PC-3 (cell line): ENCODE measurements at regions of chr20 and their contacts with region 1.

Region 1: DNA sequence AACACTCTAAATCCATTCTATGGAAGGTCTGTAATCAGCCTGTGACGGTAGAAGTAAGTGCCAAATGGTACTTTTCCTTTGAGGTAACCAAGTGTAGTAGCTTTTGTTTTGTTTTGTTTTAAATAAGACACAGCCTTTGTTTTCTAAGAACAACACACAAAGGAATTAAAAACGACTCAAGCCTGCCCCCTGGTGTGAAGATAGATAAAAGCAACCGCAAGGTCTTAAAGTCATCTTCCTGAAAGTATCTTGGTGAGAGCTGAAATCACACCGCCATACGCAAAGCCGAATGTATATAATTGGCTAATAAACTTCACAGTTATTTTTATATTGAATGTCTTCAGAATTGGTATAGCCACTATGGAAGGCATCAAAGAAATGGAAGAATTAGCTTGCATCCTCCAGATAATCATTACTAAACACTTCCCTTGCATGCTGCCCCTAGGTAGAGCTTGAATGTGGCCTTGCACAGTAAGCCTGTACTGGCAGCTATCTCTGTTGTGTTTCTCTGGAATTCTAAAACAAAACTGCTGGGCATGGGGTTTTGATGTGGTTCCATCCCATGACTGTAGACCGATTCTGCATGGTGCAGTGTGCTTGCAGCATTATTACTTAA is 95.6 kb downstream of the LAMP5 start:
- DNase-seq: peak; percentile 94
- ATAC-seq: peak; percentile 78
- H3K4me3 ChIP-seq: no peak overlapping the region
- H3K27ac ChIP-seq: no peak overlapping the region
- H3K4me1 ChIP-seq: peaks cover 7% of the 10 kb centered on the region
- H3K27me3 ChIP-seq: no peaks in the 10 kb centered on the region
- CTCF ChIP-seq: peak; percentile 93

Region 2: GRCh38 chr20:7897781-7898364 is 1712.1 kb before region 1 on chr20:
- CTCF ChIA-PET with region 1: no interaction called
- POLR2A ChIA-PET with region 1: interaction called, 30 read pairs
- intact Hi-C with region 1: no loop called
- DNase-seq: no peak
- ATAC-seq: no peak
- H3K4me3 ChIP-seq: no peak overlapping the region
- H3K27ac ChIP-seq: no peak overlapping the region
- H3K4me1 ChIP-seq: peaks cover 16% of the 10 kb centered on the region
- H3K27me3 ChIP-seq: no peaks in the 10 kb centered on the region
- CTCF ChIP-seq: no peak

Region 3: GRCh38 chr20:9458138-9458796 is 151.7 kb before region 1 on chr20:
- CTCF ChIA-PET with region 1: interaction called, 7 read pairs
- POLR2A ChIA-PET with region 1: no interaction called
- intact Hi-C with region 1: loop called (anchors 2 kb)
- DNase-seq: peak; percentile 61
- ATAC-seq: peak; percentile 48; the same call in 1 of the 2 replicates
- H3K4me3 ChIP-seq: no peak overlapping the region
- H3K27ac ChIP-seq: no peak overlapping the region
- H3K4me1 ChIP-seq: peaks cover 16% of the 10 kb centered on the region
- H3K27me3 ChIP-seq: no peaks in the 10 kb centered on the region
- CTCF ChIP-seq: peak; percentile 80

Region 4: GRCh38 chr20:9517297-9518162 is 92.5 kb before region 1 on chr20:
- CTCF ChIA-PET with region 1: interaction called, 14 read pairs
- POLR2A ChIA-PET with region 1: no interaction called
- intact Hi-C with region 1: no loop called
- DNase-seq: no peak
- ATAC-seq: no peak
- H3K4me3 ChIP-seq: no peak overlapping the region
- H3K27ac ChIP-seq: no peak overlapping the region
- H3K4me1 ChIP-seq: peaks cover 4% of the 10 kb centered on the region; the same call in 1 of the 2 replicates
- H3K27me3 ChIP-seq: peaks cover 19% of the 10 kb centered on the region
- CTCF ChIP-seq: no peak

Region 5: DNA sequence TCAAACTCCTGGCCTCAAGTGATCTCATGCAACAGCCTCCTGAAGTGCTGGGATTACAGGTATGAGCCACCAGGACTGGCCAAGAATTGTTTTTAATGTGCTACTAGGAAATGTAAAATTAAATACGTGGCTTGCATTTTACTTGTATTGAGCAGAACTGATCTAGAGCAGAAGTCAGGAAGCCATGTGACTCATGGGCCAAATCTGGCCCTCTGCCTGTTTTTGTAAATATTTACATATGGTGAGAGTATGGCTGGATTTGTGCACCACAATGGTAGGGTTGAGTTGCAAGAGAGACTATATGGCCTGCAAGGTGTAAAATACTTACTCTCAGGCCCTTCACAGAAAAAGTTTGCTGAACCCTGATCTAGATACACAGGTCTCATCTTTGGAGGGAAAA is 19.8 kb before region 1 on chr20:
- CTCF ChIA-PET with region 1: interaction called, 10 read pairs
- POLR2A ChIA-PET with region 1: no interaction called
- intact Hi-C with region 1: no loop called
- DNase-seq: peak; percentile 99
- ATAC-seq: peak; percentile 82
- H3K4me3 ChIP-seq: no peak overlapping the region
- H3K27ac ChIP-seq: peak overlapping the region; percentile 62
- H3K4me1 ChIP-seq: peaks cover 53% of the 10 kb centered on the region
- H3K27me3 ChIP-seq: no peaks in the 10 kb centered on the region
- CTCF ChIP-seq: no peak

Region 6: GRCh38 chr20:9626357-9626756 is 16.4 kb after region 1 on chr20:
- CTCF ChIA-PET with region 1: no interaction called
- POLR2A ChIA-PET with region 1: no interaction called
- intact Hi-C with region 1: no loop called
- DNase-seq: peak; percentile 70
- ATAC-seq: peak; percentile 65
- H3K4me3 ChIP-seq: no peak overlapping the region
- H3K27ac ChIP-seq: no peak overlapping the region
- H3K4me1 ChIP-seq: 0 out of 2 replicates have a peak, but pooled peaks cover 4% of the 10 kb centered on the region
- H3K27me3 ChIP-seq: peaks cover 42% of the 10 kb centered on the region; the same call in 1 of the 2 replicates
- CTCF ChIP-seq: no peak

Region 7: DNA sequence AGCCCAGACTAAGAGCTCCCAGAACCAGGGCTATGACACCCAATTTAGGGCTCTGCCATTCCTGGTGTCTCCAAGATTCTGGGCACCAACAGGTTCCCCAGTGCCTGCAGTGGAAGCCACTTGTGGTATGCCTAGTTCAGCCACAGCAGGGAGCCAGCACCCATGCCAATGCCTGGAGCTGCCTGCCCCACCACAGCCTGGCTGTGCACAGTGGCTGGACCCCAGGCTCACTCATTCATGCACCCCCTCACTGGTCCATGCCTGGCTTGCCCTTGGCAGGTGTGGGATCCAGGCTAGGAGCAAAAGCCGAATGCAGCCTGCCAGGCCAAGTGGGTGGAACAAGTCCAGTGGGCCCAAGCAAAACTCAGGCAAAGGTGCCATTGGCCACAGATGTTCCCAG is 732.2 kb after region 1 on chr20:
- CTCF ChIA-PET with region 1: interaction called, 12 read pairs
- POLR2A ChIA-PET with region 1: no interaction called
- intact Hi-C with region 1: no loop called
- DNase-seq: no peak
- ATAC-seq: no peak
- H3K4me3 ChIP-seq: no peak overlapping the region
- H3K27ac ChIP-seq: no peak overlapping the region
- H3K4me1 ChIP-seq: no peaks in the 10 kb centered on the region
- H3K27me3 ChIP-seq: peaks cover 56% of the 10 kb centered on the region; the same call in 1 of the 2 replicates
- CTCF ChIP-seq: no peak